Aorta (tissue), 5 donors: ENCODE measurements at regions of chr14 and their contacts with region 1.

Region 1: GRCh38 chr14:32576088-32576795 is 247.1 kb downstream of the AKAP6 start:
- DNase-seq: no peak
- ATAC-seq: peak; percentile 93
- H3K4me3 ChIP-seq: peak overlapping the region in 1 of 2 donors; percentile 18
- H3K27ac ChIP-seq: no peak overlapping the region
- H3K4me1 ChIP-seq: no peaks in the 10 kb centered on the region
- H3K27me3 ChIP-seq: no peaks in the 10 kb centered on the region

Region 2: DNA sequence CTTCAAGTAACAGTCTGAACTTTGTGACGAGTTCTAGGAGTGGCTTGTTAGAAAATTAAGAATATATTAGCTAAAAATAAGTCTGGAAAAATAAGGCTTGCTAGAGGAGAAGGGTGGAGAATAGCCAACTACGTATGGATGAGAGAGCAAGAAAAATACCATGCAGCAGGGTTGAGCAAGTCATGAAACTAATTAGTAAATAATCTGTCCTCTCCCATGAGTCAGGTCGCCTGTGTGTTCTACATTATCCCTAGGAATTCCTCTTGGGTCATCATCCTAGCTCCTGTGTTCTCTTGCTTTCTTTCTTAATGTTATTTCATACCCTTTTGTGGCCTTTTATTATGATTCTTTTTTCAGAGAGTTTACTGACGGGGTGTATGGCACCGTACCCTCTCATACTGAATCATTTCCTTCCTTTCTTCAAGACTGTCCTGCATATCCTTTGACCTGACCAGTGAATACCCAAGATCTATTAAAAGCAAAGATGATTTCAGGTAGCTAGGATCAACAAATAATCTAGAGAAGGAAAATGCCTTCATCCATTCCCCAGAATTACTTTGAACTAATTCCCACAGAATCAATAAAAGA is 185.2 kb after region 1 on chr14:
- intact Hi-C with region 1: no loop called
- DNase-seq: no peak
- ATAC-seq: no peak
- H3K4me3 ChIP-seq: peak overlapping the region in 1 of 2 donors; percentile 10
- H3K27ac ChIP-seq: peak overlapping the region; percentile 44 to 90
- H3K4me1 ChIP-seq: peaks cover 0 to 10% of the 10 kb centered on the region in 2 donors
- H3K27me3 ChIP-seq: no peaks in the 10 kb centered on the region

Region 3: GRCh38 chr14:32826404-32827082 is 250.3 kb after region 1 on chr14:
- intact Hi-C with region 1: loop called (anchors 10 kb)
- DNase-seq: no peak
- ATAC-seq: peak; percentile 56
- H3K4me3 ChIP-seq: peak overlapping the region in 1 of 2 donors; percentile 18
- H3K27ac ChIP-seq: peak overlapping the region in 1 of 2 donors; percentile 44
- H3K4me1 ChIP-seq: peaks cover 7% of the 10 kb centered on the region in 2 donors
- H3K27me3 ChIP-seq: no peaks in the 10 kb centered on the region

Region 4: GRCh38 chr14:32934073-32934890 is 358.0 kb after region 1 on chr14:
- intact Hi-C with region 1: loop called in 1 of 2 experiments (anchors 5 kb)
- DNase-seq: peak; percentile 46 to 75
- ATAC-seq: peak; percentile 17
- H3K4me3 ChIP-seq: peak overlapping the region; percentile 41 to 84
- H3K27ac ChIP-seq: no peak overlapping the region
- H3K4me1 ChIP-seq: no peaks in the 10 kb centered on the region
- H3K27me3 ChIP-seq: no peaks in the 10 kb centered on the region

Region 5: GRCh38 chr14:33792720-33793368 is 1216.6 kb after region 1 on chr14:
- intact Hi-C with region 1: loop called (anchors 5 kb)
- DNase-seq: peak; percentile 82 to 95
- ATAC-seq: peak; percentile 92
- H3K4me3 ChIP-seq: peak overlapping the region; percentile 18 to 65
- H3K27ac ChIP-seq: no peak overlapping the region
- H3K4me1 ChIP-seq: no peaks in the 10 kb centered on the region
- H3K27me3 ChIP-seq: no peaks in the 10 kb centered on the region